ENCODE measurements at regions of chr10 and their contacts with region 1.

Region 1: GRCh38 chr10:61937631-61938351 is 36.3 kb downstream of the ARID5B start:
- DNase-seq: peak; percentile 100
- ATAC-seq: peak; percentile 55
- H3K4me3 ChIP-seq: peak overlapping the region; percentile 5; the same call in 1 of the 2 replicates
- H3K27ac ChIP-seq: peak overlapping the region; percentile 81
- H3K4me1 ChIP-seq: peaks cover 59% of the 10 kb centered on the region
- H3K27me3 ChIP-seq: no peaks in the 10 kb centered on the region
- CTCF ChIP-seq: no peak

Region 2: GRCh38 chr10:61628875-61629513 is 308.8 kb before region 1 on chr10:
- CTCF ChIA-PET with region 1: no interaction called
- POLR2A ChIA-PET with region 1: no interaction called
- intact Hi-C with region 1: loop called (anchors 5 kb)
- DNase-seq: peak; percentile 100
- ATAC-seq: peak; percentile 93
- H3K4me3 ChIP-seq: no peak overlapping the region
- H3K27ac ChIP-seq: peak overlapping the region; percentile 1; the same call in 1 of the 2 replicates
- H3K4me1 ChIP-seq: peaks cover 31% of the 10 kb centered on the region
- H3K27me3 ChIP-seq: no peaks in the 10 kb centered on the region
- CTCF ChIP-seq: no peak

Region 3: DNA sequence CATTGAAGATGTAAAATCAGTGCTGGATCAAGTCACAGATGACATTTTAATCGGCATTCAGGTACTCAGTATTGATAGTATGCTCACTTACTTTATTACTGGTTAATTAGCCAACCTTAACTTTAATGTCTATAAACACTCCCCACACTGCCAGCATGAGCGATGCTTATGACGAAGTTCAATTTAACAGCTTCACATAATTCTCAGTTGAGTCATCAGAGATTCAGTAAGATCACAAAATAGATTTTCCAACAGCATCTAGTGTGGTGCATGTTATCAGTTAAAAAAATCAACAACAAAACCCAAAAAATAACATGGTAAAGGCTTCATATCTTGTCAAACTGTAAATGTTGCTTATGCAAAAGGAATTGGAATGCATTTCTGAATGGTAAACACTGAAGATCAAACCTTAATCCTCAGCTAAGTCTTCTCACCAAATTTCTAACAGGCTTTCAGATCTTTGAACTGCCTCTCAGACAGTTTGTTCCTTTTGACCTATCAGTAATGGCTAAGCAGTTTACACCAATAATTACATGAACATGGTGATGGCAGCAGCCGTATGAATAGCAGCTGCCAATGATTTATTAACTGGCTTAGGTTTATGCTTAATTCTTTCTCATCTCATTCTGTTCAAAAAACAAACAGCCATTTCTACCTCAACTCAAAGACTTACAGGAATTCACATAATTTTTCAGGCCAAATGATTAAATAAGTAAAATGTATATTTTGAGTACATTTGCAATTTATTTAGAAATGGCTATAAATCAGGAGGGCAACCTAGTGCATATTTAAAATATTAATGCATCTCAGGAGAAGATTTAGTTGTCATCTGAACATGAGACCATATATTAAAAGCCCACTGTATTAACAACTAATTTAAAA is 176.6 kb before region 1 on chr10:
- CTCF ChIA-PET with region 1: no interaction called
- POLR2A ChIA-PET with region 1: no interaction called
- intact Hi-C with region 1: loop called (anchors 1 kb)
- DNase-seq: peak; percentile 99
- ATAC-seq: peak; percentile 66
- H3K4me3 ChIP-seq: peak overlapping the region; percentile 4; the same call in 1 of the 2 replicates
- H3K27ac ChIP-seq: peak overlapping the region; percentile 77
- H3K4me1 ChIP-seq: peaks cover 53% of the 10 kb centered on the region
- H3K27me3 ChIP-seq: no peaks in the 10 kb centered on the region
- CTCF ChIP-seq: no peak

Region 4: DNA sequence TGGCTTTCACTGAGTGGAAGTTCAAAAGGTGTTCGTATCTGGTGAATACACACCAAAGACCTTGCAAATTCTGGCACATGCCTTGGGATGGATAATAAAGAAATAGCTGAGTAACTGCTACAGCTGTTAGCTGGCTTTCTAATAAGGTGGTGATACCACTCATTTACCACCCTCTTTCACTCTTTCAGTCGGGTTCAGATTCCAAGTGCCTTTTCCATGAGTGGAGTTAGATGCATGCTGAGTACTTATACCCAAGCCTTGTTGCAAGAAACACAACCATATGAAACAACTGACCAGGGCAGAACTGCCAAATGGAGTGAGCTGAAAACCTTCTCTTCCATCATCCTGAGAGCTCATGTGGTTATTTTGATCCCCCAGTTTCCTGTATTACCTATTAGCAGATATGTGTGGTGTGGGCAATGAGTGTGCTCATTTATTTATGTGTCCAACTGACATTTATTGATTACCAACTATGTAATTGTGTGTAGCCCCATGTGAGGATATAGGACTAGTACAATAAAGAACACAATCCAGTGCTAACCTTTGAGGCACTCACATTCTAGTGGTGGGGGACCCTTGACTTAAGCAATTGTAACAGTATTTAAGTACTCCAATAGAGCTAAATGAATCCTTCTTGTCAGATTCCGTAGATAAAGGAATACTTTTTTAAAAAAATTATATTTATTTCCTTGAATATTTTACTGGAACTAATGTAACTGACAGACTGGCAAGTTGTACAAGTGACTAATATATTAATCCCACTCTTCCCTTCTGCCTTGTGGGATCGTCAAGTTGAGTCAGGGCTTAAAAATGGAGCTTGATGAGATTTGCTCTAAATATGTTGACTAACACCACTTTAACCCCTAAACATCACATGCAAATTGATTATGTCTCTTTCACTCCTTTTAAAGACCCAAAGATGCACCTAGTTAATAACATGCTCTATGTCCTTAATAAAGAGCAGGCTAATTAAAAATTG is 88.4 kb after region 1 on chr10:
- CTCF ChIA-PET with region 1: interaction called, 7 read pairs
- POLR2A ChIA-PET with region 1: interaction called, 3 read pairs
- intact Hi-C with region 1: loop called (anchors 1 kb)
- DNase-seq: peak; percentile 99
- ATAC-seq: peak; percentile 37
- H3K4me3 ChIP-seq: no peak overlapping the region
- H3K27ac ChIP-seq: peak overlapping the region; percentile 86
- H3K4me1 ChIP-seq: peaks cover 77% of the 10 kb centered on the region
- H3K27me3 ChIP-seq: no peaks in the 10 kb centered on the region
- CTCF ChIP-seq: no peak

Region 5: DNA sequence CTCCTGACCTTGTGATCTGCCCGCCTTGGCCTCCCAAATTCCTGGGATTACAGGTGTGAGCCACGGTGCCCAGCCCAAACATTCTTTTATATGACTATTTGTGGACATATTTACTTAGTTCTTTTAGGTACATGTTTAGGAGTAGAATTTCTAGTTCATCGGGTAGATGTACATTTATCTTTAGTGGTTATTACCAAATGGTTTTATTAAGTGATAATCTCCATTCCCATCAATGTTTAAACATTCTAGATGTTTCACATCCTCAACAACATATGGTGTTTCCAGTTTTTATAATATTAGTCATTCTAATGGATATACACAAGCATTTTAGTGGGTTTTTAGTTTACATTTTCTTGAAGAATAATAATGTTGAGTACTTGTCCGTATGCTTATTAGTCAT is 199.1 kb after region 1 on chr10:
- CTCF ChIA-PET with region 1: no interaction called
- POLR2A ChIA-PET with region 1: no interaction called
- intact Hi-C with region 1: loop called (anchors 5 kb)
- DNase-seq: peak; percentile 100
- ATAC-seq: peak; percentile 85
- H3K4me3 ChIP-seq: no peak overlapping the region
- H3K27ac ChIP-seq: peak overlapping the region; percentile 76
- H3K4me1 ChIP-seq: peaks cover 25% of the 10 kb centered on the region
- H3K27me3 ChIP-seq: no peaks in the 10 kb centered on the region
- CTCF ChIP-seq: no peak

Region 6: DNA sequence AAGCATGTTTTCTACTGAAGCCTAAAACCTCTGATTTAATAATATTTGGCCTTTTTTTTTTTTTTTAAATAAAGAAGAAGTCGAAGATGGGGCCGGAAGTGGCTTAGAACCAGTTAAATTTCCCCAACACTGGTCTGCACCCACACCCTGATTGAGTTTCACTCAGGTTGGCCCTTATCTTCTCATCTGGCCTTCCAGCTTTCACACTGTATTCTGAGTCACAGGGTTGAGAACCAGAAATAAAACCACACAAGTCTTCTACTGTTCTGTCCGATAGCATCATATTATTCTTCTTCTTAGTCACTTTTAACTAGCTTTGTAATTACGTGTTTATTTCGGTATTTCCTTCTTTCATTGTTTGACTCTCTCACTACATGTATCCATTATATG is 446.3 kb after region 1 on chr10:
- CTCF ChIA-PET with region 1: no interaction called
- POLR2A ChIA-PET with region 1: no interaction called
- intact Hi-C with region 1: loop called (anchors 2 kb)
- DNase-seq: peak; percentile 100
- ATAC-seq: peak; percentile 74
- H3K4me3 ChIP-seq: peak overlapping the region; percentile 36
- H3K27ac ChIP-seq: peak overlapping the region; percentile 79
- H3K4me1 ChIP-seq: peaks cover 88% of the 10 kb centered on the region
- H3K27me3 ChIP-seq: no peaks in the 10 kb centered on the region
- CTCF ChIP-seq: no peak